CD8-positive, alpha-beta T cell (primary cell): ENCODE measurements at regions of chr16 and their contacts with region 1.

Region 1: DNA sequence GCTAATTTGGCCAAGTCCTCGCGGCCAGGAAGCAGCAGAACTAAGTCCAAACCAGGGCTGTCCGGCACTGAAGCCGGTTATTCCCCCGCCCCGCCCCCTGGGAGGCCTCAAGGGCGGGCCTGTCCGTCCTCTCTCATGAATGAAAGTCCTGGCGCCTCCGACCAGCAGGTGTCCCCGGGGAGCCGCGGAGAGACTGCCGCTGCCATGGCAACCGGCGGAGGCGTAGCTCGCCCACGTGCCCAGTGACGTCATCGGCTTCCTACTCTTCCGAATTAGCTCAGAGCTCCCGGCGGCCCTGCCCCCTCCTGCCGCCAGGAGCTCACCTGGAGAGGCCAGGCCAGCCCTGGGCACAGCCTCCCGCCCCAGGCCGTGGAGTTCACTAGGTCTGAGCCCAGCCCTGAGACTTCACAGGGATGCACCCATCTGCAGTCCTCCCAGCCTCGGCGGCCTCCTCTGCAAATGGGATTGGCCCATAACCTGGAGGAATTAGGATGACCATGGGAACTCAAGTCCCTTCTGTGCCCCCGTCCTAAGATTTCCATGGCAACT is 1.3 kb downstream of the SPATA2L start:
- DNase-seq: peak; percentile 89 to 99 (median 96)
- ATAC-seq: peak; percentile 11
- H3K4me3 ChIP-seq: peak overlapping the region; percentile 50 to 96
- H3K4me3 Mint-ChIP-seq: peak overlapping the region; percentile 80
- H3K27ac ChIP-seq: peak overlapping the region; percentile 82 to 97
- H3K27ac Mint-ChIP-seq: peak overlapping the region; percentile 90
- H3K4me1 ChIP-seq: peaks cover 35% of the 10 kb centered on the region
- H3K4me1 Mint-ChIP-seq: peaks cover 16% of the 10 kb centered on the region
- H3K27me3 ChIP-seq: no peaks in the 10 kb centered on the region
- H3K27me3 Mint-ChIP-seq: no peaks in the 10 kb centered on the region
- CTCF ChIP-seq: peak; percentile 89

Region 2: GRCh38 chr16:88700636-88701482 is 999.3 kb before region 1 on chr16:
- CTCF ChIA-PET with region 1: no interaction called
- POLR2A ChIA-PET with region 1: no interaction called
- intact Hi-C with region 1: loop called in 1 of 2 experiments (anchors 5 kb)
- DNase-seq: peak; percentile 92 to 98 (median 97)
- ATAC-seq: peak; percentile 65
- H3K4me3 ChIP-seq: peak overlapping the region; percentile 74 to 95
- H3K4me3 Mint-ChIP-seq: peak overlapping the region; percentile 90
- H3K27ac ChIP-seq: peak overlapping the region; percentile 83 to 91
- H3K27ac Mint-ChIP-seq: peak overlapping the region; percentile 98
- H3K4me1 ChIP-seq: peaks cover 56% of the 10 kb centered on the region
- H3K4me1 Mint-ChIP-seq: peaks cover 61% of the 10 kb centered on the region
- H3K27me3 ChIP-seq: no peaks in the 10 kb centered on the region
- H3K27me3 Mint-ChIP-seq: no peaks in the 10 kb centered on the region
- CTCF ChIP-seq: no peak

Region 3: GRCh38 chr16:89517128-89517527 is 183.0 kb before region 1 on chr16:
- CTCF ChIA-PET with region 1: no interaction called
- POLR2A ChIA-PET with region 1: no interaction called
- intact Hi-C with region 1: no loop called
- DNase-seq: no peak
- ATAC-seq: no peak
- H3K4me3 ChIP-seq: no peak overlapping the region
- H3K4me3 Mint-ChIP-seq: no peak overlapping the region
- H3K27ac ChIP-seq: no peak overlapping the region
- H3K27ac Mint-ChIP-seq: no peak overlapping the region
- H3K4me1 ChIP-seq: no peaks in the 10 kb centered on the region
- H3K4me1 Mint-ChIP-seq: peaks cover 3% of the 10 kb centered on the region
- H3K27me3 ChIP-seq: no peaks in the 10 kb centered on the region
- H3K27me3 Mint-ChIP-seq: no peaks in the 10 kb centered on the region
- CTCF ChIP-seq: no peak

Region 4: GRCh38 chr16:89657442-89658220 is 42.5 kb before region 1 on chr16 and contains the starts of genes CHMP1A and SPATA33:
- CTCF ChIA-PET with region 1: interaction called, 3 read pairs
- POLR2A ChIA-PET with region 1: interaction called, 6 read pairs
- intact Hi-C with region 1: loop called (anchors 1 kb)
- DNase-seq: peak; percentile 85 to 97 (median 91)
- ATAC-seq: peak; percentile 88
- H3K4me3 ChIP-seq: peak within 1 kb of the TSS; percentile 73 to 91
- H3K4me3 Mint-ChIP-seq: peak within 1 kb of the TSS; percentile 80
- H3K27ac ChIP-seq: peak within 1 kb of the TSS; percentile 81 to 85
- H3K27ac Mint-ChIP-seq: peak within 1 kb of the TSS; percentile 64
- H3K4me1 ChIP-seq: peaks cover 19% of the 10 kb centered on the region
- H3K4me1 Mint-ChIP-seq: peaks cover 29% of the 10 kb centered on the region
- H3K27me3 ChIP-seq: no peaks in the 10 kb centered on the region
- H3K27me3 Mint-ChIP-seq: no peaks in the 10 kb centered on the region
- CTCF ChIP-seq: no peak
- total RNA-seq, gene CHMP1A: 82.9 to 90.8 TPM
- total RNA-seq, gene SPATA33: 4.8 to 5.1 TPM

Region 5: GRCh38 chr16:89720813-89721545 is 20.8 kb after region 1 on chr16 and contains the starts of genes VPS9D1 and ZNF276:
- CTCF ChIA-PET with region 1: interaction called, 33 read pairs
- POLR2A ChIA-PET with region 1: interaction called, 22 read pairs
- intact Hi-C with region 1: loop called (anchors 1 kb)
- DNase-seq: peak; percentile 71 to 92 (median 85)
- ATAC-seq: peak; percentile 45
- H3K4me3 ChIP-seq: peak within 1 kb of the TSS; percentile 86 to 98
- H3K4me3 Mint-ChIP-seq: peak within 1 kb of the TSS; percentile 96
- H3K27ac ChIP-seq: peak within 1 kb of the TSS; percentile 73 to 96
- H3K27ac Mint-ChIP-seq: peak within 1 kb of the TSS; percentile 99
- H3K4me1 ChIP-seq: peaks cover 38% of the 10 kb centered on the region
- H3K4me1 Mint-ChIP-seq: peaks cover 41% of the 10 kb centered on the region
- H3K27me3 ChIP-seq: no peaks in the 10 kb centered on the region
- H3K27me3 Mint-ChIP-seq: no peaks in the 10 kb centered on the region
- CTCF ChIP-seq: no peak
- total RNA-seq, gene VPS9D1: 15.7 to 15.9 TPM
- total RNA-seq, gene ZNF276: 127 to 130 TPM

Region 6: GRCh38 chr16:89795676-89796075 is 95.5 kb after region 1 on chr16:
- CTCF ChIA-PET with region 1: interaction called, 352 read pairs
- POLR2A ChIA-PET with region 1: interaction called, 5 read pairs
- intact Hi-C with region 1: loop called (anchors 1 kb)
- DNase-seq: no peak
- ATAC-seq: no peak
- H3K4me3 ChIP-seq: no peak overlapping the region
- H3K4me3 Mint-ChIP-seq: no peak overlapping the region
- H3K27ac ChIP-seq: no peak overlapping the region
- H3K27ac Mint-ChIP-seq: no peak overlapping the region
- H3K4me1 ChIP-seq: no peaks in the 10 kb centered on the region
- H3K4me1 Mint-ChIP-seq: peaks cover 13% of the 10 kb centered on the region
- H3K27me3 ChIP-seq: no peaks in the 10 kb centered on the region
- H3K27me3 Mint-ChIP-seq: no peaks in the 10 kb centered on the region
- CTCF ChIP-seq: no peak

Region 7: GRCh38 chr16:89860747-89861304 is 160.7 kb after region 1 on chr16:
- CTCF ChIA-PET with region 1: interaction called, 272 read pairs
- POLR2A ChIA-PET with region 1: interaction called, 13 read pairs
- intact Hi-C with region 1: loop called (anchors 1 kb)
- DNase-seq: peak; percentile 61 to 87 (median 76)
- ATAC-seq: peak; percentile 92
- H3K4me3 ChIP-seq: no peak overlapping the region
- H3K4me3 Mint-ChIP-seq: no peak overlapping the region
- H3K27ac ChIP-seq: no peak overlapping the region
- H3K27ac Mint-ChIP-seq: no peak overlapping the region
- H3K4me1 ChIP-seq: peaks cover 30% of the 10 kb centered on the region
- H3K4me1 Mint-ChIP-seq: peaks cover 29% of the 10 kb centered on the region
- H3K27me3 ChIP-seq: peaks cover 0 to 2% of the 10 kb centered on the region in 2 experiments
- H3K27me3 Mint-ChIP-seq: no peaks in the 10 kb centered on the region
- CTCF ChIP-seq: peak; percentile 98

Region 8: DNA sequence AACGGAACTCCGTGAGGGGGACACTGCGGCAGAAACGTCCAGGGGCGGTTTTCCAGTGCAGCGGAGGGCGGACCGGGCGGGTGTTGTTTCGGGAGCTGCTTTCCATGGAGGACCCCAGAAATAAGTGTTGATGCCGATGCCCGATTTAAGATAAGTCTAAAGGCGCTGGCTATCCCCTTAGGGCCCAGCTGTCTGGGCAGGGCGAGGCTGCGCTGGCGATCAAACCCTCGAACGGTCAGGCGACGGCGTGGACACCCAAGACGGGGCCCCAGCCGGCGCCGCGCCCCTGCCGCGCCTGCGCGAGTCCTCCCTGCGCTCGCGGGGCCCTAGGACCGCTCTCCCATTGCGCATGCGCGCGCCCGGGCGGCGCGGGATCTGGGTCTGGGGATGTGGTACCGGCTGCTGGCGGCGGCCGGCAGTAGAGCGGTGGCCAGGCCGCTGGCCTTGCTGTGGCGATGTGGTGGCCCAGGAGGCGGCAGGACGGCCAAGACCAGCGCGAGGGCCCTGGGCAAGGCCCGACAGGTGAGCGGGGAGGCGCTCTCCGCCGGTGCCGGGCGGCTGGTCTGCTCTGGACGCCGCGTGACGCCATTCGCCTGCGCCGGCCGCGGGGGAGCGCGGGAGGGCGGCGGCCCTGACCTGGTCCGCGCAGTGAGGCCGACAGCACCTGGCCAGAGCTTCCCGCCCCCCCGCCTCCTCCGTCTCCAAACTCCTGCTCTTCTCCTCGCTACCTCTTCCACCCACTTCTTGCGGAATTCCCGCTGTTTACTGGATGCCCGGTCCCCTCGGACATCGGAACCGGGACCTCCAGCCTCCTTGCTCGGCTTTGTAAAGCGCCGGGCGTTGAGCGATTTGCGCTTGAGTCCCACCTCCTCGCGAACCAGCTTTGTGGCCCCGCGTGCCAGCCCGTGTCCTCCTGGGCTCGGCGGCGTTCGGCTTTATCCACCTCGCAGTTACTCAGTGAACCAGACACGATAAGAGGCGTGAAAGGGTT is 272.4 kb after region 1 on chr16:
- CTCF ChIA-PET with region 1: no interaction called
- POLR2A ChIA-PET with region 1: no interaction called
- intact Hi-C with region 1: loop called in 1 of 2 experiments (anchors 5 kb)
- DNase-seq: peak; percentile 81 to 96 (median 90)
- ATAC-seq: peak; percentile 95
- H3K4me3 ChIP-seq: peak overlapping the region; percentile 73 to 93
- H3K4me3 Mint-ChIP-seq: peak overlapping the region; percentile 98
- H3K27ac ChIP-seq: peak overlapping the region; percentile 77 to 79
- H3K27ac Mint-ChIP-seq: peak overlapping the region; percentile 94
- H3K4me1 ChIP-seq: peaks cover 24% of the 10 kb centered on the region
- H3K4me1 Mint-ChIP-seq: peaks cover 38% of the 10 kb centered on the region
- H3K27me3 ChIP-seq: no peaks in the 10 kb centered on the region
- H3K27me3 Mint-ChIP-seq: no peaks in the 10 kb centered on the region
- CTCF ChIP-seq: no peak